Activated CD8-positive, alpha-beta T cell treated with anti-CD3 and anti-CD28 coated beads for 36 hours (primary cell): ENCODE measurements at regions of chr21 and their contacts with region 1.

Region 1: GRCh38 chr21:36989699-36990507 is 16.6 kb upstream of the RIPPLY3 start:
- DNase-seq: peak; percentile 88
- ATAC-seq: peak; percentile 88
- H3K4me3 Mint-ChIP-seq: peak overlapping the region; percentile 68
- H3K27ac Mint-ChIP-seq: peak overlapping the region; percentile 90
- H3K4me1 Mint-ChIP-seq: peaks cover 38% of the 10 kb centered on the region
- H3K27me3 Mint-ChIP-seq: no peaks in the 10 kb centered on the region
- CTCF ChIP-seq: peak; percentile 83

Region 2: DNA sequence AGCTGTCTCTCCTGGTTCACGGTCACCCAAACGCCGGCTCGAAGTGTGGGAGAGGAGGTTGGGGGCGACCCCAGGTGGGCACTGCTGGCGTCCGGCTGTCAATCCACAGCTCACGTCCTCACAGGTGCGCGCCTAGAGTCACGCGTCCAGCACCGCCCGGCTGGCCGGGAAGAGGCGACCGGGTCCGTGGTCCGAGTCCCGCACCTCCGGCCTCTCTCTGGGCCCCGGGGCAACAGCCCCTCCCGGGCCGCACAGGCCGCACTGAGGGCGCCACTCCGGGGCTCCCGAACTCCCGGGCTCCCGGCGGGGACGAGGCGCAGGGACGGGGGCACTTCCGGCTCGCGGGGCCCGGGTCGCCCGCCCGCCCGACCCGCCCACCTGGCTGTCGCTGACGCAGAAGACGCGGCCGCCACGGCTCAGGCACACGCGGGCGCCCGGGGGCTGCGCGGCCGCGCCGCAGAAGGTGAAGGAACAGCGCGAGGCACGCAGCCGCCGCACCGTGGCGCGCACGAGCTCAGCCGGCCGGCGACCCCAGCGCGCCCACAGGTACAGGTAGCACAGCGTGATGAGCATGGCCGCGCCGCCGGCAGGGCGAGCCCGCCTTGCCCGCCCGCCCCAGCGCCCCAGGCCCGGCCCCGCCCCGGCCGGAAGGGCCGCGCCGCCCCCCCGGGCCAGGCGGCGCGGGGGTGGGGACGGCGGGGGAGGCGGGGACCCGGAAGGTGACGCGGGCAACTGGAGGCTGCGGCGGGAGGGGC is 23.7 kb before region 1 on chr21 and contains the start of gene HLCS:
- CTCF ChIA-PET with region 1: interaction called, 28 read pairs
- POLR2A ChIA-PET with region 1: interaction called, 9 read pairs
- intact Hi-C with region 1: no loop called
- DNase-seq: peak; percentile 78
- ATAC-seq: peak; percentile 89
- H3K4me3 Mint-ChIP-seq: peak within 1 kb of the TSS; percentile 88
- H3K27ac Mint-ChIP-seq: peak within 1 kb of the TSS; percentile 93
- H3K4me1 Mint-ChIP-seq: peaks cover 22% of the 10 kb centered on the region
- H3K27me3 Mint-ChIP-seq: no peaks in the 10 kb centered on the region
- CTCF ChIP-seq: no peak
- total RNA-seq, gene HLCS: 12.5 to 15.5 TPM

Region 3: DNA sequence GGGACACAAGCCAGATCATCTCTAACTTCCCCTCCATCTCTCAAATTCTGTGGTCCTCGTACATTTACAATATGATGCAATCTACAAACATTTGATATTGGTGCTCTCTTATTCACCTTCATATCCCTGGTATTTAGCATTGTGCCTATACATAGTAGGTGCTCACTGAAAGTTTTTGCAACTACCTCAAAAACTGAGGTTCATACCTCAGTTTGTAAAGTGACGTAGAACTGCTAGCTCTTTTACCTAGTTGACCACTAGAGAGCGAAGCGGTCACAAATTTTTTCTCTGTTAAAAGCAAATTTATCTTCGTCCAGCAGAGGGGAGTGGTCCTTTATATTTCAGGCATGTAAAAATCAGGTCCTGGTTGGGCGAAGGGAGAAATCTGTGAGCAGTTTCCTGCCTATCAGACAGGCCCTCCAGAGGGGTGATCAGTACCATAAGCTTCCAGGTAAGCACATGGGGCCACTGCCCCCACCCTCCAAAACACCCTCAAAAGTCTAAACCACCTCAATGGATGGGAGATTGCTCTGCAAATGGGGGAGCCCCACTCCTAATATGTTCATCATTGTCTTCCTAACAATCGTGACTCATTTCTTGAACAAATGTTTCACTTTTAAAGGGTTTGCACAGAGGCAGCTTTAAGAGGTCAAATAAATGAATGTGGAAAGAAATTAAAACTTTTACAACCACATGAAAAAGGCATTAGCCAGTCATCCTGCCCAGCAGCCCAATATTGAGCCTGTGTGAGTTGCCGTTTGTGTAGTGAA is 12.8 kb before region 1 on chr21:
- CTCF ChIA-PET with region 1: interaction called, 33 read pairs
- POLR2A ChIA-PET with region 1: interaction called, 17 read pairs
- intact Hi-C with region 1: no loop called
- DNase-seq: peak; percentile 84
- ATAC-seq: peak; percentile 93
- H3K4me3 Mint-ChIP-seq: no peak overlapping the region
- H3K27ac Mint-ChIP-seq: peak overlapping the region; percentile 69
- H3K4me1 Mint-ChIP-seq: peaks cover 32% of the 10 kb centered on the region
- H3K27me3 Mint-ChIP-seq: peaks cover 1% of the 10 kb centered on the region
- CTCF ChIP-seq: peak; percentile 77

Region 4: GRCh38 chr21:37000381-37000780 is 10.5 kb after region 1 on chr21:
- CTCF ChIA-PET with region 1: interaction called, 13 read pairs
- POLR2A ChIA-PET with region 1: no interaction called
- intact Hi-C with region 1: no loop called
- DNase-seq: no peak
- ATAC-seq: no peak
- H3K4me3 Mint-ChIP-seq: no peak overlapping the region
- H3K27ac Mint-ChIP-seq: no peak overlapping the region
- H3K4me1 Mint-ChIP-seq: peaks cover 5% of the 10 kb centered on the region
- H3K27me3 Mint-ChIP-seq: no peaks in the 10 kb centered on the region
- CTCF ChIP-seq: no peak

Region 5: GRCh38 chr21:37009740-37010341 is 19.9 kb after region 1 on chr21:
- CTCF ChIA-PET with region 1: interaction called, 11 read pairs
- POLR2A ChIA-PET with region 1: interaction called, 6 read pairs
- intact Hi-C with region 1: no loop called
- DNase-seq: peak; percentile 81
- ATAC-seq: peak; percentile 92
- H3K4me3 Mint-ChIP-seq: peak overlapping the region; percentile 56
- H3K27ac Mint-ChIP-seq: no peak overlapping the region
- H3K4me1 Mint-ChIP-seq: peaks cover 9% of the 10 kb centered on the region
- H3K27me3 Mint-ChIP-seq: peaks cover 38% of the 10 kb centered on the region
- CTCF ChIP-seq: peak; percentile 88

Region 6: GRCh38 chr21:37032877-37033471 is 43.1 kb after region 1 on chr21:
- CTCF ChIA-PET with region 1: no interaction called
- POLR2A ChIA-PET with region 1: no interaction called
- intact Hi-C with region 1: no loop called
- DNase-seq: peak; percentile 11
- ATAC-seq: no peak
- H3K4me3 Mint-ChIP-seq: no peak overlapping the region
- H3K27ac Mint-ChIP-seq: no peak overlapping the region
- H3K4me1 Mint-ChIP-seq: no peaks in the 10 kb centered on the region
- H3K27me3 Mint-ChIP-seq: no peaks in the 10 kb centered on the region
- CTCF ChIP-seq: no peak

Region 7: DNA sequence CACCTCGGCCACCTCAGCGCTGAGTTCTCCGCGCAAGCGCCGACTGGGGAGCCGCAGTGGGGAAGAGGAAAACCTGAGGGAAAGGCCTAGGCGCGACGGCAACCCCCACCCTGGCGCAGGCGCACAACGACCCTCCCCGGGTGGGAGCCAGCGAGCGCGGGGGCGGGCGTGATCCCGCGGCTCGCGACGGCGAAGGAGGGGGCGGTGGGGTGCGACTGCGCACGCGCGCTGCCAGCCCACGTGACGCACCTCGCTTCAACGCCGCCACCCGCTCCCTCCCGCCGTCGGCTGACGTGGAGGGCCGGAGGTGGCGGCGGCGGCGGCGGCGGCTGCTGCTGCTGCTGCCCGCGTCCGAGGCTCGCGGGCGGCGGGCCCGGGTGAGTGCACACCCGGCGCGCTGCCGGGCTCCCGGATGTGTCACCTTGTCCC is 83.1 kb after region 1 on chr21 and contains the starts of genes PIGP and TTC3:
- CTCF ChIA-PET with region 1: interaction called, 5 read pairs
- POLR2A ChIA-PET with region 1: interaction called, 3 read pairs
- intact Hi-C with region 1: loop called (anchors 10 kb)
- DNase-seq: peak; percentile 93
- ATAC-seq: peak; percentile 73
- H3K4me3 Mint-ChIP-seq: peak within 1 kb of the TSS; percentile 94
- H3K27ac Mint-ChIP-seq: peak within 1 kb of the TSS; percentile 92
- H3K4me1 Mint-ChIP-seq: peaks cover 39% of the 10 kb centered on the region
- H3K27me3 Mint-ChIP-seq: no peaks in the 10 kb centered on the region
- CTCF ChIP-seq: no peak
- total RNA-seq, gene PIGP: 23.4 to 24.3 TPM
- total RNA-seq, gene TTC3: 70.2 to 74.0 TPM